Naive thymus-derived CD4-positive, alpha-beta T cell (primary cell): ENCODE measurements at regions of chr2 and their contacts with region 1.

Region 1: DNA sequence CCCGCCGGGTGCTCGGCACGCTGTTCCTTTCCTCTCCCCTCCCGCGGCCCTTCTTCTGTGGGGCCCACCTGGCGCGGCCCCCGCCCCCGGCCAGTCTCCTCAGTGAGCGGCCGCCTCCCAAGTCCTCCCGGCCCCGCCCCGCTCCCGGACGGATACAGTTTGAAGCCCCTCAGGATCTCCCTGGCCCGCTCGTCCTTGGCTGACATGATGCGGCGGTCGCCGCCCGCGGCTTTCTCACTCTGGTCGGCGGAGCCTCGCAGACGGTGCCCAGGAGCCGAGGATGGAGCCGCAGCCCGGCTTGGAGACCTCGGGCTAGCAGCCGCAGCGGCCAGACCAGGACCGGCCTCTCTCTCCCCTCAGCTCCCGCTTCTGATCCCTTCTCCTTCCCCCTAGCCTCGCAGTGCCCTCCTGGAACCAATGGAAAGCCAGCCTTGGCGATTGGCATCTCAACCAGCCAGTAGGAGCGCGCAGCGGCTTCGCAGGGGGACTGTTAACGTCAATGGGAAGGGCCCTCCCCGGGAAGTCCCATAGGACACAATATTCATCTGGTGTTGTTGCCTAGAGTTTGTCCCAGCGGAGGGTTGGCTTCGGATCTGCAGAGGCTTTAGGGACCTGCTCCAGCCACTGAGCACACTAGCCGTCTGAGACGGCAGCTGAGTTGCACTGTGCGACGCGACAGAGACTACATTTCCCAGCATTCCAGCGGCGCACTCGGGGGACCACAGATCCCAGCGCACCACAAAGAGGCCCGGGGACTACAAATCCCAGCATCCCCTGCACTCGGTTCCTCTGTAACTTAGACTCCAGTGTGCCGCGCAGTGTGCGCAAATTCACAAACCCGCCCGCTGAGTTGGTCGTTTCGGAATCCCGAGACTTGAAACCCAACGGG is at the start of gene PDE6D:
- DNase-seq: peak; percentile 90 to 98 (median 94)
- ATAC-seq: peak; percentile 94
- H3K4me3 ChIP-seq: peak within 1 kb of the TSS; percentile 100
- H3K4me3 Mint-ChIP-seq: peak within 1 kb of the TSS; percentile 85 to 99 (median 98)
- H3K27ac ChIP-seq: peak within 1 kb of the TSS; percentile 82
- H3K27ac Mint-ChIP-seq: peak within 1 kb of the TSS; percentile 90 to 98 (median 94)
- H3K4me1 ChIP-seq: peaks cover 26 to 30% of the 10 kb centered on the region in 2 donors
- H3K4me1 Mint-ChIP-seq: peaks cover 45 to 76% (median 57%) of the 10 kb centered on the region in 7 donors
- H3K27me3 ChIP-seq: no peaks in the 10 kb centered on the region
- H3K27me3 Mint-ChIP-seq: peaks cover 0 to 5% (median 0%) of the 10 kb centered on the region in 5 donors
- total RNA-seq, gene PDE6D: 14.3 to 35.7 (median 25.2) TPM

Region 2: GRCh38 chr2:231612179-231613053 is 168.7 kb before region 1 on chr2:
- CTCF ChIA-PET with region 1: no interaction called
- POLR2A ChIA-PET with region 1: no interaction called
- intact Hi-C with region 1: loop called (anchors 1 to 2 kb)
- DNase-seq: peak; percentile 70 to 95 (median 84)
- ATAC-seq: peak; percentile 88
- H3K4me3 ChIP-seq: peak overlapping the region; percentile 63
- H3K4me3 Mint-ChIP-seq: peak overlapping the region; percentile 65 to 96 (median 86)
- H3K27ac ChIP-seq: no peak overlapping the region
- H3K27ac Mint-ChIP-seq: peak overlapping the region in 7 of 9 donors; percentile 38 to 99 (median 69)
- H3K4me1 ChIP-seq: peaks cover 13 to 19% of the 10 kb centered on the region in 2 donors
- H3K4me1 Mint-ChIP-seq: peaks cover 7 to 51% (median 31%) of the 10 kb centered on the region in 7 donors
- H3K27me3 ChIP-seq: no peaks in the 10 kb centered on the region
- H3K27me3 Mint-ChIP-seq: no peaks in the 10 kb centered on the region

Region 3: DNA sequence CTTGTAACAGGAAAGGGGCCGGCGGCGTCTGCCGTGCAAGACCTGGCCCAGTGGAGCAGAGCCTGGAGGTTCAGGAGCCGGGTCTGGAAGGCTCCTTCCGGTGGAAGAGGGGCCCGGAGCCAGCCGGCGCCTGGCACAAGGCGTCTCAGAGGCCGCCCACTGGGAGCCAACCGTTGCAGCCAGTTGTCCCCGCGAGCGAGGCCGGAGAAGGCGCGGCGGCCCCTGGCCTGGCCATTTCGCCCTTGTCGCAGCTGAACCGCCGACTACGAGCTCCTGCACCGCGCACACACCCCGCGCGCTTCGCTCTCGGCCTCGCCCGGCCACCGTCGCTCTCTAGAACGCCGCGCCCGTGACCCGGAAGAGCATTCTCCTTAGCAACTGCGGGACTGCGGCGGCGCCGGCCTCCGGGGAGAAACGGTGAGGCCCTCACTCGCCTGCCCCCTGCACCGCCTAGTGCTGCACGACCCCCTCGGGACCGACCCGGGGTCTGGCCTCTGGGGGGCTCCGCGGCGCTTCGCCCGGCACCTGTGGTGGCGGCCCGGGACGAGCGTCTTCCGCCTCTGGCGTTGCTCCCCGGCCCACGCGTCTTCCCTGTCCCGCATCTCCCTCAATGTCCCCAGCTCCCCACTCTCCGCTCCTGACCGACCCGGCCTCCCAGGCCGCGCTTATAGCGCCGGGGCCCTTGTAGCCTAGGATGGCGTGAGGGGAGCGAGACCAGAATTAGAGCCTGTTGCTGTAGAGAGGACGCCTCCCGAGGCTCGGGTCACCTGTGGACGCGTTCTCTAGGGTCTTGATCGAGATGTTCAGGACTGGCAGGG is 180.4 kb after region 1 on chr2 and contains the start of gene DIS3L2:
- CTCF ChIA-PET with region 1: no interaction called
- POLR2A ChIA-PET with region 1: no interaction called
- intact Hi-C with region 1: loop called (anchors 1 kb)
- DNase-seq: peak; percentile 66 to 83 (median 81)
- ATAC-seq: peak; percentile 96
- H3K4me3 ChIP-seq: peak within 1 kb of the TSS; percentile 79
- H3K4me3 Mint-ChIP-seq: peak within 1 kb of the TSS; percentile 83 to 96 (median 91)
- H3K27ac ChIP-seq: peak within 1 kb of the TSS; percentile 77
- H3K27ac Mint-ChIP-seq: peak within 1 kb of the TSS; percentile 78 to 96 (median 94)
- H3K4me1 ChIP-seq: peaks cover 14 to 17% of the 10 kb centered on the region in 2 donors
- H3K4me1 Mint-ChIP-seq: peaks cover 22 to 52% (median 45%) of the 10 kb centered on the region in 7 donors
- H3K27me3 ChIP-seq: no peaks in the 10 kb centered on the region
- H3K27me3 Mint-ChIP-seq: peaks cover 0 to 3% (median under 1%) of the 10 kb centered on the region in 5 donors
- total RNA-seq, gene DIS3L2: 47.1 to 78.4 (median 66.4) TPM

Region 4: DNA sequence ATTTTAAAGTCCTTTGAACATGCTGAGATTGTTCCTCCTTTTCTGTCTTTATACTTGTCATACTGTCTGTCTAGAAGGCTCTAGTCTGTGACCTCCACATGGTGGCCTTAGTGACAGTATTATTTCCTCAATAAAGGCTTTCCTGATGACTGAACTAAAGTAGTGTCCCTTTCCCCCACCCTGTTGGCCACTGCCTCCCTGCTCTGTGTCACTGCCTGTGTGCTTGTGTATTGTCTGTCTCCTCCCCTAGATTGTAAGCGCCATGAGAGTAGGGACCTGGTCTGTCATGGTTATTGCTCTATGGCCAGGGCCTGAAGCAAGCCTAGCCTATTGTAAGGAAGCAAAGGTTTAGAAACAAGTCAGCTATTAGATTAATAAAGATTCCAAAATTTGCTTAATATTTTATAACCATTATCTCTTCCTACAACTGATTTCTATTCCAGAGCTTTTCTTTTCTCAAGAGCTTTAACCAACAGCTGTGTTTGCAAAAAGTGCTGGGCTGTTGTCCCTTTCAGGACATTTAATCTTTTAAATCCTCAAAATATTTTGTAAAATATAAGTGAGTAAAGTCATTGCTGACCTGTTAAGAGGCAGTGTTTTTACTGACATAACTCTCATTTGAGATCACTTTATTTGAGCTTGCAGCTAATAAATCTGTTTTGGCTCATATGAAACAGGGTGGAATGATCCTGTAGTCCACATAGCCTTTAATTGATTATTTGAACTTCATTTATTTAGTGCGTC is 215.8 kb after region 1 on chr2:
- CTCF ChIA-PET with region 1: no interaction called
- POLR2A ChIA-PET with region 1: no interaction called
- intact Hi-C with region 1: no loop called
- DNase-seq: no peak
- ATAC-seq: no peak
- H3K4me3 ChIP-seq: no peak overlapping the region
- H3K4me3 Mint-ChIP-seq: no peak overlapping the region
- H3K27ac ChIP-seq: no peak overlapping the region
- H3K27ac Mint-ChIP-seq: peak overlapping the region in 1 of 9 donors; percentile 22
- H3K4me1 ChIP-seq: no peaks in the 10 kb centered on the region
- H3K4me1 Mint-ChIP-seq: peaks cover 0 to 85% (median 74%) of the 10 kb centered on the region in 7 donors
- H3K27me3 ChIP-seq: no peaks in the 10 kb centered on the region
- H3K27me3 Mint-ChIP-seq: no peaks in the 10 kb centered on the region

Region 5: GRCh38 chr2:233603520-233603919 is 1822.4 kb after region 1 on chr2:
- CTCF ChIA-PET with region 1: no interaction called
- POLR2A ChIA-PET with region 1: no interaction called
- intact Hi-C with region 1: no loop called
- DNase-seq: no peak
- ATAC-seq: no peak
- H3K4me3 ChIP-seq: no peak overlapping the region
- H3K4me3 Mint-ChIP-seq: no peak overlapping the region
- H3K27ac ChIP-seq: no peak overlapping the region
- H3K27ac Mint-ChIP-seq: no peak overlapping the region
- H3K4me1 ChIP-seq: no peaks in the 10 kb centered on the region
- H3K4me1 Mint-ChIP-seq: no peaks in the 10 kb centered on the region
- H3K27me3 ChIP-seq: no peaks in the 10 kb centered on the region
- H3K27me3 Mint-ChIP-seq: peaks cover 13 to 31% (median 19%) of the 10 kb centered on the region in 5 donors